ENCODE measurements at regions of chr6 and their contacts with region 1.

Region 1: GRCh38 chr6:26285143-26286134 is 79.6 kb upstream of the BTN3A2 start:
- DNase-seq: peak; percentile 80
- ATAC-seq: peak; percentile 75
- H3K4me3 Mint-ChIP-seq: peak overlapping the region; percentile 86
- H3K27ac Mint-ChIP-seq: peak overlapping the region; percentile 96
- H3K4me1 Mint-ChIP-seq: peaks cover 29% of the 10 kb centered on the region
- H3K27me3 Mint-ChIP-seq: peaks cover 3% of the 10 kb centered on the region
- CTCF ChIP-seq: no peak

Region 2: DNA sequence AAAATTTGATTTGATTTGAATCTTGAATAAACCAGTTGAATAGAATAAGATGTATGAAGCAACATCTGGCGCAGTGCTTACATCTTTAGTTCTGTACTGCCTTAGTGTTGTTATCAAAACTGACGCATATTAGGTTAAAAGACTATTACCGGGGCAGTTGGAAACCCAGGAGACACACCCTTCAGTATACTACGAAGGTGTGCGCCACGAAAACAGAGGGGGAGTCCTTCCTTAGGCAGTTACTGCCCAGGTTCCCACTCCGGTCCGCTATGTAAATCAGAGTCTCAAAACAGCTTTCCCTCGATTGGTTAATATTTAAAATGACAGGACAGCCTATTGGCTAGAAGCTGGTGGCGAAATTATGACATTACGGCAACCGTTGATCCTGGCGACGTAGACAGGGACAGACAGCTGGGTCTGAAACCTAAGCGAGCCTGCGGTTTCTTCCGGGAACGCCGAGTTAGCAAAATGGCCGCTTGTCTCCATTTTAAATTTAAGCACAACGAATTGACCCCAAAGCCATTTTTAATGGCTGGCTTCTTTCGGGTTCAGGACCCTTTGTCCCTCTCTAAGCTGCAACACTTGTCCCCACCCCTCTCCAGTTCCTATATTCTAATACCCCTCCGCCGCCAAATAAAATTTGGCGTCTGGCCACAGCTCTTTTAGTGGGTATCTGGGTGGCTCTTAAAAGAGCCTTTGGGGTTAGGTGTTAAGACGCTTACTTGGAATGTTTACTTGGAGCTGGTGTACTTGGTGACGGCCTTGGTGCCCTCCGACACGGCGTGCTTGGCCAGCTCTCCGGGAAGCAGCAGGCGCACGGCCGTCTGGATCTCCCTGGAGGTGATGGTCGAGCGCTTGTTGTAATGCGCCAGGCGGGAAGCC is 162.4 kb before region 1 on chr6:
- CTCF ChIA-PET with region 1: no interaction called
- POLR2A ChIA-PET with region 1: interaction called, 35 read pairs
- intact Hi-C with region 1: loop called (anchors 1 kb)
- DNase-seq: peak; percentile 68
- ATAC-seq: peak; percentile 60
- H3K4me3 Mint-ChIP-seq: peak overlapping the region; percentile 94
- H3K27ac Mint-ChIP-seq: peak overlapping the region; percentile 99
- H3K4me1 Mint-ChIP-seq: peaks cover 34% of the 10 kb centered on the region
- H3K27me3 Mint-ChIP-seq: no peaks in the 10 kb centered on the region
- CTCF ChIP-seq: no peak

Region 3: GRCh38 chr6:26135484-26135883 is 150.0 kb before region 1 on chr6:
- CTCF ChIA-PET with region 1: no interaction called
- POLR2A ChIA-PET with region 1: no interaction called
- intact Hi-C with region 1: no loop called
- DNase-seq: no peak
- ATAC-seq: no peak
- H3K4me3 Mint-ChIP-seq: no peak overlapping the region
- H3K27ac Mint-ChIP-seq: peak overlapping the region; percentile 74
- H3K4me1 Mint-ChIP-seq: peaks cover 59% of the 10 kb centered on the region
- H3K27me3 Mint-ChIP-seq: no peaks in the 10 kb centered on the region
- CTCF ChIP-seq: no peak

Region 4: GRCh38 chr6:26216356-26216885 is 69.0 kb before region 1 on chr6:
- CTCF ChIA-PET with region 1: no interaction called
- POLR2A ChIA-PET with region 1: interaction called, 141 read pairs
- intact Hi-C with region 1: loop called (anchors 1 kb)
- DNase-seq: peak; percentile 62
- ATAC-seq: peak; percentile 78
- H3K4me3 Mint-ChIP-seq: no peak overlapping the region
- H3K27ac Mint-ChIP-seq: no peak overlapping the region
- H3K4me1 Mint-ChIP-seq: peaks cover 12% of the 10 kb centered on the region
- H3K27me3 Mint-ChIP-seq: no peaks in the 10 kb centered on the region
- CTCF ChIP-seq: no peak

Region 5: DNA sequence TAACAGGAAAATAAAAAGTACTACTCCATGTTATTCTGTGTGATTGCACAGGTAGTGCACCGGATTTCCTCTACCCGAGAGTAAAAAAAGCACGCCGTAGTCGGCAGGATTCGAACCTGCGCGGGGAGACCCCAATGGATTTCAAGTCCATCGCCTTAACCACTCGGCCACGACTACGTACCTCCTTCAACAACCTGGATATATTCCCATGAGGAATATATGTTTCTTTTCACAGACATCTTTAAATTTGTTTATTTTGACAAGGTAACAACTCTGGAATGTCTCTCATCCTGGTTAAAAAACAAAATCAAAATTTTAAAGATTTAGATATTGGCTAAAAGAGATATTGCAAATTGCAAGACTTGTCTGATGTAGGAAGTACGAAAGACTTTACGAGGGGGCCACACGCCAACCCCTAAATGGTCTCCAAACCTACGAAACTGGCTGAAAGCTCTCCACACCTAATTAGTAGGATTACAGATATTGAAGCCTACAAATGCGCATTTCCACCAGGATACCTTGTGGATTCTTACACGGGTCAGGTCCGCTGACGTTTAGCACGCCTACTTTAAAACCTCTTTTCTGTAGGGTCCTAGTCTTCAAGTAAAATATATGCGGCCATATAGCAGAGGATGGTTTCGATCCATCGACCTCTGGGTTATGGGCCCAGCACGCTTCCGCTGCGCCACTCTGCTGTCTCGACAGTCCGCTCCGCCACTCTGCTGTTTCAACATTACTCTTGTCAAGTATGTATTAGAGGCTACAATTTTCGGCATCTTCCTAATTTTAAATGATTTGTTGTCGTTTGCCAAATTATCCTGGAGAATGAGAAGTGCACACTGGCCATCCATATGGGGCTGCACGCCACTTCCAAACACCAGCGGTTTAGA is 27.3 kb after region 1 on chr6:
- CTCF ChIA-PET with region 1: no interaction called
- POLR2A ChIA-PET with region 1: interaction called, 5 read pairs
- intact Hi-C with region 1: loop called (anchors 1 kb)
- DNase-seq: peak; percentile 63
- ATAC-seq: peak; percentile 79
- H3K4me3 Mint-ChIP-seq: peak overlapping the region; percentile 90
- H3K27ac Mint-ChIP-seq: peak overlapping the region; percentile 95
- H3K4me1 Mint-ChIP-seq: peaks cover 28% of the 10 kb centered on the region
- H3K27me3 Mint-ChIP-seq: peaks cover 5% of the 10 kb centered on the region
- CTCF ChIP-seq: no peak

Region 6: DNA sequence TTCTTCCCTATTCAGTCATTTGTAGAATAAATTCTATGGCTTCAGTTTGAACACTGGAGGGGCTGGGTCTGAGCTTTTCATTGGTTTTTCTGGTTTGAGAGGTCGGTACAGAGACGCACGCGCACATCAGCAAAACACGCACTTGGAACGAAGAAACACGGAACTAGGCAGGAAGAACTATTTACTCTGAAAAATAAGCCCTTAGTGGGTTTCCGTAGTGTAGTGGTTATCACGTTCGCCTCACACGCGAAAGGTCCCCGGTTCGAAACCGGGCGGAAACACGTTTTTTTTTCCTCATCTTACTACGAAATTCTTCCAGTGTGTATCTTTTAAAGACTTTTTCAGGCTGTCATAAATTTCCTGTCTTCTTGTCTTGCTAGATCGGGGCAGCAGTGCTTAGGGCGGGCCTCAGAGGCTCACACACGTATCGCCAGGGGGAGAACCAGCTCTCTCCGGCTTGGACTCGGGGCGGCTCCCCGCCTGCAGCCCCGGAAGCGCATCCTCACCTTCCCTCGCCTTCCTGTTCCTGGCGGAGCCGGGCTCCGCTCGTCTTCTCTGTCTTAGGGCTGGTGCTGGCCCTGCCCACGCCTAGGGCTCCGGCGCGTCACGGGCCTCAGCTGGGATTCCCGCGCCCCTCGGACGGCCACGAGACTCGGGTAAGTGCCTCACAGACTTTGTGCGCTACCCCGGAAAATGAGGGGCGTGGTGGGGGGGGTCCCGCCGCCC is 252.6 kb after region 1 on chr6 and contains the start of gene HMGN4:
- CTCF ChIA-PET with region 1: no interaction called
- POLR2A ChIA-PET with region 1: interaction called, 30 read pairs
- intact Hi-C with region 1: loop called (anchors 1 kb)
- DNase-seq: peak; percentile 73
- ATAC-seq: peak; percentile 67
- H3K4me3 Mint-ChIP-seq: peak within 1 kb of the TSS; percentile 98
- H3K27ac Mint-ChIP-seq: peak within 1 kb of the TSS; percentile 97
- H3K4me1 Mint-ChIP-seq: peaks cover 65% of the 10 kb centered on the region
- H3K27me3 Mint-ChIP-seq: peaks cover 7% of the 10 kb centered on the region
- CTCF ChIP-seq: no peak
- total RNA-seq, gene HMGN4: 74.5 and 82.2 TPM in 2 replicates

Region 7: DNA sequence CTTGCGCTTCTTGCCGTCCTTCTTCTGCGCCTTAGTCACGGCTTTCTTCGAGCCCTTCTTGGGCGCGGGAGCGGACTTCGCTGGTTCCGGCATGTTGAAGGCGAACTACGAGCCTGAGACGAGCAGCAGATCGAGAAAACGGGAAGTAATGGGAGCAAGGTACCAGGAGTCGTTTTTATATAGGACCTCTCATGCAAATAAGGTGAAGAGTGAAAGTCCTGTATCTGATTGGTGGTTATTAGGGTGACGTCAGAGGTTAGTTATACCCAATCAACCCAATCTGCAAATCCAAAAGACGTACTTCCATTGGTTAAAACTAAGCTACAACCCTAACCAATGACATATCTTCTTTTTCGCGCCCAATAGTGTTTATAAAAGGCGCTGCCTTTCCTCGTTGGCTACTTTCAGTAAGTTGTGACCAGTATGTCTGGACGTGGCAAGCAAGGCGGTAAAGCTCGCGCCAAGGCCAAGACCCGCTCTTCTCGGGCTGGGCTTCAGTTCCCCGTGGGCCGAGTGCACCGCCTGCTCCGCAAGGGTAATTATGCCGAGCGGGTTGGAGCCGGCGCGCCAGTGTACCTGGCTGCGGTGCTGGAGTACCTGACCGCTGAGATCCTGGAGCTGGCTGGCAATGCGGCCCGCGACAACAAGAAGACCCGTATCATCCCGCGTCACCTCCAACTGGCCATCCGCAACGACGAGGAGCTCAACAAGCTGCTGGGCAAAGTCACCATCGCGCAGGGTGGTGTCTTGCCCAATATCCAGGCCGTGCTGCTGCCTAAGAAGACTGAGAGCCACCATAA is 861.5 kb after region 1 on chr6:
- CTCF ChIA-PET with region 1: no interaction called
- POLR2A ChIA-PET with region 1: interaction called, 18 read pairs
- intact Hi-C with region 1: no loop called
- DNase-seq: peak; percentile 70
- ATAC-seq: peak; percentile 80
- H3K4me3 Mint-ChIP-seq: no peak overlapping the region
- H3K27ac Mint-ChIP-seq: no peak overlapping the region
- H3K4me1 Mint-ChIP-seq: peaks cover 26% of the 10 kb centered on the region
- H3K27me3 Mint-ChIP-seq: no peaks in the 10 kb centered on the region
- CTCF ChIP-seq: no peak

Measured in activated B cell treated with CpG ODN at 0.5 μM for 24 hours (primary cell).